ENCODE measurements at regions of chr16 and their contacts with region 1.

Region 1: DNA sequence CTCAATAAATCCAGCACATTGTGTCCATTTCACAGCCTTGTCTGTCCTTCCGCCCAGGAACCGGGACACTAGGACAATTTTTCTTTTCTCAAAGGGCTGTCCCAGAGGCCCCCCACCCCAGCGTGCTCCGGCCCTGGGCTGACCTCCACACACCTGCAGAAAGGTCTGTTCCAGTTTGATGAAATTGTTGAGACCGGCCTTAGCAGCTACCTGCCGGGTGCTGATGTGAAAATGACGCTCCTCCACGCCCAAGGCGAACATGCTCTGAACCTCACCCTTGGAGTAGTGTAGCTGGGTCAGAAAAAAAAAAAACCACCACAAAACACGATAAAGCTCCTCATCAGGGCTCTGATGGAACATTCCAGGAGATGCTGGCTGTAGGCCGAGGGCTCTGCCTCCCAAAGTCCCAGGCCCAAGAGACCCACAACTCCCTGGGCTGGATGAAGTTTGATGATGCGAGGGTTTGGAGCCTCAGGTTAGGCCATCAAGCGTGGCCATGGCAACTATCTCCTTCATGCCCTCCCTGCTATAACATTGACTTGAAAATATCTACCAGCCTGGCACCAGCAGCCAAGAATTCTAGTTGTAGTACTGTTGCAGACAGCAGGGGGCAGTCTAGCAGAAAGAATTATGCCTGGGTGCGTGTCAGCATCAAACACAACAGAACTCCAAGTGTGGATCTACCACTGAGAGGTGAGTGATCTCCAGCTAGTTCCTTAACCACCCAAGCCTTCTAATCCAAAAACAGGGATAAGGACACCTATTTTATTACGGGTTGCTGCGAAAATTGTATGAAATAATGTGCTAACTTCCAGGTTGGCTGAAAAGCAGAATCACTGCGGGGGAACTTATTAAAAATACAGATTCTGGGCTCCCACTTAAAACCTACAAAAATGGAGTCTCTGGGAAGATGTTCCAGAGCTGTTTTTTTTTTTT is 62.1 kb downstream of the RMI2 start:
- DNase-seq: no peak
- ATAC-seq: peak; percentile 45 to 51

Region 2: GRCh38 chr16:11526655-11527350 is 119.5 kb after region 1 on chr16:
- intact Hi-C with region 1: loop called in 1 of 2 experiments (anchors 10 kb)
- DNase-seq: no peak
- ATAC-seq: no peak

Region 3: GRCh38 chr16:11639925-11640899 is 232.9 kb after region 1 on chr16:
- intact Hi-C with region 1: loop called in 1 of 2 experiments (anchors 5 kb)
- DNase-seq: peak; percentile 85
- ATAC-seq: peak; percentile 88 to 93

Measured in left cardiac atrium (tissue), 4 donors.